Activated CD4-positive, alpha-beta memory T cell treated with anti-CD3 and anti-CD28 coated beads for 36 hours (primary cell): ENCODE measurements at regions of chr4 and their contacts with region 1.

Region 1: GRCh38 chr4:82900331-82901128 is at the start of gene THAP9:
- DNase-seq: peak; percentile 99
- H3K4me3 Mint-ChIP-seq: no peak within 1 kb of the TSS
- H3K27ac Mint-ChIP-seq: no peak within 1 kb of the TSS
- H3K4me1 Mint-ChIP-seq: peaks cover 36% of the 10 kb centered on the region
- H3K27me3 Mint-ChIP-seq: no peaks in the 10 kb centered on the region
- total RNA-seq, gene THAP9: 2.3 to 2.4 TPM

Region 2: GRCh38 chr4:82373816-82374625 is 526.5 kb before region 1 on chr4 and contains the start of gene HNRNPD:
- CTCF ChIA-PET with region 1: no interaction called
- POLR2A ChIA-PET with region 1: no interaction called
- intact Hi-C with region 1: loop called (anchors 1 kb)
- DNase-seq: peak; percentile 96
- H3K4me3 Mint-ChIP-seq: peak within 1 kb of the TSS; percentile 97
- H3K27ac Mint-ChIP-seq: peak within 1 kb of the TSS; percentile 97
- H3K4me1 Mint-ChIP-seq: peaks cover 35% of the 10 kb centered on the region
- H3K27me3 Mint-ChIP-seq: no peaks in the 10 kb centered on the region
- total RNA-seq, gene HNRNPD: 398 to 400 TPM

Region 3: DNA sequence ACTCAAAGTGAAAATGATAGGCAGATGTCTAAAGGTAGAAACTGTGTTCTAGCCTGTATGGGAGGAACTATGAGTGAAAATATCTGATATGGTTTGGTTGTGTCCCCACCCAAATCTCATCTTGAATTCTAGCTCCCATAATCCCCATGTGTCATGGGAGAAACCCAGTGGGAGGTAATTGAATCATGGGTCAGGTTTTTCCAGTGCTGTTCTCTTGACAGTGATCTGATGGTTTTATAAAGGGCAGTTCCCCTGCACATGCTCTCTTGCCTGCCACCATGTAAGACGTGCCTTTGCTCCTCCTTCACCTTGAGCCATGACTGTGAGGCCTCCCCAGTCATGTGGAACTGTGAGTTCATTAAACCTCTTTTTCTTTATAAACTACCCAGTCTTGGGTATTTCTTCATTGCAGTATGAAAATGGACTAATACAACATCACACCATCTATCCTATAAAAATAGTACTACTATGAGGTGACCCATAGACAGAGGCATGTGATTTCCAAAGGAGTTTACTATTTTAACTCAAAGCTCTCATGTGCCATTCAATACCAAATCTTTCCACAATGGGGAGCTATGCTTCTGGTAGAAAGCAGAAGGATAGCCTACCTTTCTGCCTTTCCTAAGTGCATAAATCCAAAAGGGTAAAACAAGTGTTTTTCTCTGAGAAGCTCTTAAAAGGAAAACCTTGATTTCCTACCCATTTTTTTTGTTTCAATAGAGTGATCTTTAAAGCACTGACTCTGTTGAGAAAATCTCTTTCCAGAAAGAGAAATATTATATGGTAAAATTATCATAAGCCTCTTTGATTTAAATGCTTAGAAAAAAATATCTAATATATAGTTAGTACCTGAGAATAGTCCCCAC is 48.4 kb before region 1 on chr4:
- CTCF ChIA-PET with region 1: interaction called, 12 read pairs
- POLR2A ChIA-PET with region 1: interaction called, 4 read pairs
- intact Hi-C with region 1: loop called (anchors 2 kb)
- DNase-seq: no peak
- H3K4me3 Mint-ChIP-seq: no peak overlapping the region
- H3K27ac Mint-ChIP-seq: no peak overlapping the region
- H3K4me1 Mint-ChIP-seq: peaks cover 3% of the 10 kb centered on the region
- H3K27me3 Mint-ChIP-seq: no peaks in the 10 kb centered on the region

Region 4: GRCh38 chr4:83012687-83013419 is 112.3 kb after region 1 on chr4:
- CTCF ChIA-PET with region 1: interaction called, 4 read pairs
- POLR2A ChIA-PET with region 1: interaction called, 21 read pairs
- intact Hi-C with region 1: loop called (anchors 1 kb)
- DNase-seq: peak; percentile 98
- H3K4me3 Mint-ChIP-seq: peak overlapping the region; percentile 92
- H3K27ac Mint-ChIP-seq: peak overlapping the region; percentile 92
- H3K4me1 Mint-ChIP-seq: peaks cover 36% of the 10 kb centered on the region
- H3K27me3 Mint-ChIP-seq: no peaks in the 10 kb centered on the region

Region 5: DNA sequence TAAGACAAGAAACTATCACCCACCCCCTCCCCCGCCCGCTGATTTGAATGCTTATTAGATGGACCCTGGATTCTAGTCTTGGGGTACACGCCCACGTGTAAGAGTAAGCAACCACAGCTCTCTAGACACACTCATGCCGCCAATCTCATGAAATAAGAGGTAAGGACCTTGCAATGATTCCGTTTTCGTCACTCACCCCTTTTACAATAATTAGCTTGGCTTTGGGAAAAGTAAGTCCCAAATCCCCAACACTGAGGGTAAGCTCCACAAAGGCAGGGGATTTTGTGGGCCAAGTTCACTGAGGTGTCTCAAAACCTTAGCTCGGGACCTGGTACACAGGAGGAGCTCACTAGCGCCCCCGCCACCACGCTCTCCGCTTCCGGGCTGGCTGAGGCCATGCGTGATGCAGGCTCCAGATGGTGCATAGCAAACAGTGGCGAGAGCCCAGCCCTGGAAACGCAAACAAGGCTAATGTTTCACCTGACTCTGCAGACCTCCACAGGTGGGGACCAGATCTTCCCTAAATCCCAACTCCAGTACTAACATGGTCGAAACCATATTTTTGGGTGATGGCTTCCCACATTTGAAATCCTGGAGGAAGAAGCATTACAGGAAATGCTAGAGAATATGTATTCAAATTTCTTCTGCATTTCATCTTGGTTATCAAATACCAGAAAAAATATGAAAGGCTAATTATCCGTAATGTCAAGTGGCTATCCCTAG is 209.9 kb after region 1 on chr4:
- CTCF ChIA-PET with region 1: no interaction called
- POLR2A ChIA-PET with region 1: interaction called, 3 read pairs
- intact Hi-C with region 1: loop called (anchors 2 kb)
- DNase-seq: peak; percentile 94
- H3K4me3 Mint-ChIP-seq: peak overlapping the region; percentile 92
- H3K27ac Mint-ChIP-seq: peak overlapping the region; percentile 98
- H3K4me1 Mint-ChIP-seq: peaks cover 46% of the 10 kb centered on the region
- H3K27me3 Mint-ChIP-seq: no peaks in the 10 kb centered on the region

Region 6: GRCh38 chr4:83237591-83237990 is 337.1 kb after region 1 on chr4:
- CTCF ChIA-PET with region 1: no interaction called
- POLR2A ChIA-PET with region 1: no interaction called
- intact Hi-C with region 1: loop called (anchors 1 kb)
- DNase-seq: no peak
- H3K4me3 Mint-ChIP-seq: no peak overlapping the region
- H3K27ac Mint-ChIP-seq: no peak overlapping the region
- H3K4me1 Mint-ChIP-seq: peaks cover 36% of the 10 kb centered on the region
- H3K27me3 Mint-ChIP-seq: peaks cover 41% of the 10 kb centered on the region

Region 7: GRCh38 chr4:83455281-83456129 is 555.0 kb after region 1 on chr4 and contains the starts of genes HELQ and MRPS18C:
- CTCF ChIA-PET with region 1: interaction called, 3 read pairs
- POLR2A ChIA-PET with region 1: no interaction called
- intact Hi-C with region 1: loop called (anchors 2 kb)
- DNase-seq: peak; percentile 98
- H3K4me3 Mint-ChIP-seq: peak within 1 kb of the TSS; percentile 100
- H3K27ac Mint-ChIP-seq: peak within 1 kb of the TSS; percentile 100
- H3K4me1 Mint-ChIP-seq: peaks cover 44% of the 10 kb centered on the region
- H3K27me3 Mint-ChIP-seq: peaks cover 2% of the 10 kb centered on the region
- total RNA-seq, gene HELQ: 9.5 to 13.3 TPM
- total RNA-seq, gene MRPS18C: 63.3 to 72.8 TPM